ENCODE measurements at regions of chrX and their contacts with region 1.

Region 1: GRCh38 chrX:136588041-136588788 is 56.2 kb downstream of the VGLL1 start:
- DNase-seq: no peak
- H3K4me3 Mint-ChIP-seq: peak overlapping the region; percentile 40
- H3K27ac Mint-ChIP-seq: peak overlapping the region; percentile 79
- H3K4me1 Mint-ChIP-seq: peaks cover 51% of the 10 kb centered on the region
- H3K27me3 Mint-ChIP-seq: no peaks in the 10 kb centered on the region

Region 2: DNA sequence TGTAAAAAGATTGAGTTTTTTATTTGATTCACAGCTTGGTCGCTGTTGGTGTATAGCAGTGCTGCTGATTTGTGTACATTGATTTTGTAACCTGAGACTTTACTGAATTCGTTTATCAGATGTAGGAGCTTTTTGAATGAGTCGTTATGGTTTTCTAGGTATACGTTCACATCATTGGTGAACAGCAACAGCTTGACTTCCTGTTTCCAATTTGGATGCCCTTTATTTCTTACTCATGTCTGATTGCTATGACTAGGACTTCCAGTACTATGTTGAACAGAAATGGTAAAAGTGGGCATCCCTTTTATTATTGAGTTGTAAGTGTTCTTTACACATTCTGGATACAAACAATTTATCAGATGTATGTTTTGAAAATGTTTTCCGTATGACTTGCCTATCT is 211.5 kb before region 1 on chrX:
- intact Hi-C with region 1: loop called (anchors 5 kb)
- DNase-seq: no peak
- H3K4me3 Mint-ChIP-seq: no peak overlapping the region
- H3K27ac Mint-ChIP-seq: no peak overlapping the region
- H3K4me1 Mint-ChIP-seq: peaks cover 4% of the 10 kb centered on the region
- H3K27me3 Mint-ChIP-seq: peaks cover 11% of the 10 kb centered on the region

Region 3: DNA sequence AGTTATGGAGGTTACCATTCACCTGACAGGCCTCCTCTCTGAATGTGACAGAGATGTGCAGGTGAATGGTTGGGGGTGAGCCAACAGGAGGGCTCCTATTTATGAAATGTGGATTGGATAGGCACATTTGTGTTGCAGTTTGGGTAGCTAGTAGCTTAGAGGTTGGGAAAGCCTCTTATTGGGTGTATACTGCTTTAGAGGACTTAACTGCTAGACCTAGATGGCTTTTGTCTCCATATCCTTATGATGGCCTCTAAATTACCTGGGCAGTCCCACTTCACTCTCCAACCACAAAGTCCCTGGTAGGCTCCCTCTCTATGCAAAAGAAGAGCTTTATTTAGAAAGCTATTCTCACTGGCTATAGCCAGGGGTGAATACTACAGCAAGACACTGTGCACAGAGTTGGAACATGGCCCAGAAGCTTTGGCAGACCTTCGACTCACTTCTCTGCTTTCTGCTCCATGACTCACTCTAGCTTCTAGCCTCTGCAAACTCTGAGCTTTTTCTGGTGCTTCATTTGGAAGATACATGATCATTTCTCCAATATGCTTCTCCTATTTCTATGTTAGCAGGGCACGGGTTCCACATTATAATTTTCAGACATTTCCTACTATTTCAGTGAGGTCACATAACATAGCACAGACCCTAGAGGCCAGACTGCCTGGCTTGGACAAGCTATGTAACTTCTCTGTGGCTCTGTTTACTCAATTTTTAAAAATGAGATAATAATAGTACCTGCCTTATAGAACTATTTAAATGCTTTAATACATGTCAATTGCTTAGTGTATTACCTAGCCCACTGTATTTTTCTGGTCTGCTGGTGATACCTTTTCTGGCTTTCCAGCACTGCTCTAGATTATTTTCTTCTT is 62.2 kb before region 1 on chrX:
- intact Hi-C with region 1: no loop called
- DNase-seq: no peak
- H3K4me3 Mint-ChIP-seq: no peak overlapping the region
- H3K27ac Mint-ChIP-seq: no peak overlapping the region
- H3K4me1 Mint-ChIP-seq: peaks cover 5% of the 10 kb centered on the region
- H3K27me3 Mint-ChIP-seq: peaks cover 2% of the 10 kb centered on the region

Region 4: DNA sequence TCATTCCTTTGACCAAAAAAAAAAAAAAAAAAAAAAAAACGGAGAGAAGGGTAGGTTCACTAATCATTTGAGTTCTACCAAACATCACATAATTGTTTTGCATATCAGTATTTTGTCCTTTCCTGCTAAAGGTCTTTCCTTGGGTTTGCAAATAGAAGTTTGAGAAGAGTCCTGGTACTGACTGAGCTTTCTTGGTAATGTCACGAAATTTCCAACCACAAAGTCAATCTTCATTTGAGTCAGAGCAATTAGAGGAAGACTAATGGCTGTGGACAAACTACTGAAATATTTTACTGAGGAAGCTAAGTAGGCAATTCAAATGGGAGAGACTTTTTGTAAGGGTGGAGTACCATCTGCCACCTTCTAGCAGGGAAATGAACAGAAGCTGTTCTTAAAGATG is 38.0 kb after region 1 on chrX:
- intact Hi-C with region 1: loop called (anchors 2 kb)
- DNase-seq: no peak
- H3K4me3 Mint-ChIP-seq: peak overlapping the region; percentile 26
- H3K27ac Mint-ChIP-seq: peak overlapping the region; percentile 93
- H3K4me1 Mint-ChIP-seq: peaks cover 80% of the 10 kb centered on the region
- H3K27me3 Mint-ChIP-seq: no peaks in the 10 kb centered on the region

Region 5: DNA sequence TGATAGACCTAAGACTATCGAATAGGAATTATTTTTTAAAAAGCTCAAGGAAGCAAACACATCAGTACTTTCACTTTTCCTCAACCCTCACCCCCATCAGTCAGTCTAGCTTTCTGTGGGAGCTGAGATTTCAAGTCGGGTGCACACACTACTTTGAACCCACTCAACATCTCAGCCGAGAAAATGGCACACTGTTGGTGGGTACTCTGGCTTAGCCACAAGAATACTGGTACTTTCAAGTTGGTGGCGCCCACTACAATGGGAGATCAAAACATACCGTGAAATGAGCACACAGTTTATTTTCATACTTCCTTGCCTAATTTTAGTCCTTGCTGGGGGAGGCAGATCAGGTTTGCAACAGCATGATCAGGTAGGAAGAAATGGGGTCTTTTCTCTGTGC is 69.9 kb after region 1 on chrX:
- intact Hi-C with region 1: loop called (anchors 2 kb)
- DNase-seq: no peak
- H3K4me3 Mint-ChIP-seq: peak overlapping the region; percentile 75
- H3K27ac Mint-ChIP-seq: peak overlapping the region; percentile 97
- H3K4me1 Mint-ChIP-seq: peaks cover 82% of the 10 kb centered on the region
- H3K27me3 Mint-ChIP-seq: no peaks in the 10 kb centered on the region

Region 6: GRCh38 chrX:136767104-136767941 is 179.1 kb after region 1 on chrX:
- intact Hi-C with region 1: loop called (anchors 5 kb)
- DNase-seq: no peak
- H3K4me3 Mint-ChIP-seq: peak overlapping the region; percentile 78
- H3K27ac Mint-ChIP-seq: peak overlapping the region; percentile 93
- H3K4me1 Mint-ChIP-seq: peaks cover 56% of the 10 kb centered on the region
- H3K27me3 Mint-ChIP-seq: no peaks in the 10 kb centered on the region